GM12878 (cell line): ENCODE measurements at regions of chr4 and their contacts with region 1.

Region 1: DNA sequence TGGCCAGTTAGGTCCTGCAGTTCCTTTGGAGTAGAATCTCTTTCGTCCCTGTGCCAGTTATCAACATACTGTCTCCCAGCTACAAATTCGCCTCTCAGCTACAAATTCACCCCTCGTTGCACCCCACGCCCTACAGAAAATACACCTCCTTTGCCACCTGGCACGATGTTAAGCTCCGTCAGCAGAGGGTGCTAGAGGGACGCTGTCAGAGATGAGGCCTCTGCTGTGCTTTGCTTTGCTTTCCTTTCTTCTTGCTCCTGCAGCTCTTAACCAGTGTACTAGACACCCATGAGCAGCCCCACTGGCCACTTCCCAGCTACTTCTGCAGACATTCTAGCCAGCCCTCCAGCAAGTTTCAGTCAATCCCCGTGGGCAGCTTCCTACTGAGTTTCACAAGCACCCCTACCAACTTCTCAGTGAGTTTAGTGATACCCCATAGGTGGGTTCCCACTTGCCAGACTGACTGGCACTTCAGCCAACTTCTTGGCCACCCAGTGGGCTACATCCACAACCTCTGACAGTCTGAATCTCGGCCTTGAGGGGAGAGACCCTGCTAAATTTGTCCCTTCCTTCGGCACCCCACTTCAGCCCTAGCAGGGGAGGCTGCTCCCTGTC is 21.8 kb downstream of the HAUS3 start:
- DNase-seq: peak; percentile 24
- ATAC-seq: peak; percentile 99
- H3K4me3 ChIP-seq: no peak overlapping the region
- H3K27ac ChIP-seq: no peak overlapping the region
- H3K4me1 ChIP-seq: no peaks in the 10 kb centered on the region
- H3K27me3 ChIP-seq: no peaks in the 10 kb centered on the region
- CTCF ChIP-seq: peak; percentile 93 to 95 (median 93)
- EP300 ChIP-seq: no peak
- POLR2A ChIP-seq: no peak
- RAD21 ChIP-seq: peak; percentile 97

Region 2: GRCh38 chr4:2262143-2262943 is 42.2 kb after region 1 on chr4:
- CTCF ChIA-PET with region 1: no interaction called
- POLR2A ChIA-PET with region 1: no interaction called
- RAD21 ChIA-PET with region 1: interaction called, 11 read pairs
- SMC1A ChIA-PET with region 1: no interaction called
- in situ Hi-C with region 1: no loop called
- intact Hi-C with region 1: no loop called
- DNase-seq: peak; percentile 91
- ATAC-seq: peak; percentile 97
- H3K4me3 ChIP-seq: peak overlapping the region; percentile 74
- H3K27ac ChIP-seq: peak overlapping the region; percentile 82
- H3K4me1 ChIP-seq: no peaks in the 10 kb centered on the region; the same call in 1 of the 2 replicates
- H3K27me3 ChIP-seq: no peaks in the 10 kb centered on the region
- CTCF ChIP-seq: no peak
- EP300 ChIP-seq: peak in 1 of 2 experiments; percentile 36; a peak in 1 of 4 replicates
- POLR2A ChIP-seq: peak; percentile 96
- RAD21 ChIP-seq: no peak

Region 3: GRCh38 chr4:2418650-2419571 is 198.8 kb after region 1 on chr4 and contains the start of gene CFAP99:
- CTCF ChIA-PET with region 1: interaction called, 12 read pairs
- POLR2A ChIA-PET with region 1: no interaction called
- RAD21 ChIA-PET with region 1: interaction called, 7 read pairs
- SMC1A ChIA-PET with region 1: interaction called, 9 read pairs
- in situ Hi-C with region 1: no loop called
- intact Hi-C with region 1: no loop called
- DNase-seq: peak; percentile 72
- ATAC-seq: peak; percentile 93
- H3K4me3 ChIP-seq: peak within 1 kb of the TSS; percentile 67
- H3K27ac ChIP-seq: no peak within 1 kb of the TSS
- H3K4me1 ChIP-seq: peaks cover 23% of the 10 kb centered on the region
- H3K27me3 ChIP-seq: peaks cover 12 to 22% of the 10 kb centered on the region in 2 experiments
- CTCF ChIP-seq: peak in 1 of 3 experiments; percentile 31; a peak in 2 of 6 replicates
- EP300 ChIP-seq: no peak
- POLR2A ChIP-seq: no peak
- RAD21 ChIP-seq: no peak
- polyA plus RNA-seq, gene CFAP99: not detected

Region 4: DNA sequence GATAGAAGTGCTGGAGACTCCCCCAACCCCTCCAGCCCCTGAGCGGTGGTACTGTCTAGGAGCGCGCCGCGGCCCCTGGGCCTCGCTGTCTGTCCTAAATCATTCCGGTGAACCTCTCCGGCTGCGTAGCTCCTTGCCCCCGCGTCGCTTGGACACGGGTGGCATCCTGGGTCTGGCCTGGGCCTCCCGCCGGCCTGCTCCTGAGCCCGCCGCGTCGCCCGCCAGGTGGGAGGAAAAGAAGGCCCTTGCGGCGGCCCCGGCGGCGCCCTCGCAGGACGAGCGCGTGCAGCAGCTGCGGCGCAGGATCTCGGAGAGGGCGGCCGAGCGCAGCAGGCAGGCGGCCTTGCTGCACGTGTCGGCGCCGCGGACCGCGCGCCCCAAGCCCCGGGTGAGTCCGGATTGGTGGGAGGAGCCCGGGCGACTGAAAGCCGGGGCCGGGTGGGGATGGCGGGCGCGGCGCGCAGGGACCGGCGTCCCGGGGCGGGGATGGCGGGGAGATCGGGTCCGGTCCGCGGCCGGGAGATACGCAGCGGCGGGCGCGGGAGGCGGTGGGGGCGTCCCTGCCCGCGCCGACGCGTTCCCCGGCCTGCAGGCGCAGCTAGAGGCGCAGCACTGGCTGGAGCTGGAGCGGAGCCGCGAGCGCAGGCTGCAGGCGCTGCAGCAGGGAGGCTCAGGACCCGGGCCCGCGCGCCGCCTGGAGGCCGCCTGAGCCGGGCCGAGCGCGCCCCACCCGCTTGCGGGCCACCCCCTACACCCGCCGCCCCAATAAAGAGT is 242.3 kb after region 1 on chr4:
- CTCF ChIA-PET with region 1: interaction called, 7 read pairs
- POLR2A ChIA-PET with region 1: no interaction called
- RAD21 ChIA-PET with region 1: interaction called, 4 read pairs
- SMC1A ChIA-PET with region 1: no interaction called
- in situ Hi-C with region 1: no loop called
- intact Hi-C with region 1: loop called (anchors 1 kb)
- DNase-seq: no peak
- ATAC-seq: peak; percentile 97
- H3K4me3 ChIP-seq: peak overlapping the region; percentile 60; the same call in 1 of the 2 replicates
- H3K27ac ChIP-seq: no peak overlapping the region
- H3K4me1 ChIP-seq: peaks cover 4% of the 10 kb centered on the region
- H3K27me3 ChIP-seq: no peaks in the 10 kb centered on the region; a peak in 2 of 4 replicates
- CTCF ChIP-seq: peak; percentile 21 to 57 (median 41); a peak in 3 of 6 replicates
- EP300 ChIP-seq: no peak
- POLR2A ChIP-seq: no peak
- RAD21 ChIP-seq: peak; percentile 29; the same call in 1 of the 2 replicates